Ascending aorta (tissue), 2 donors: ENCODE measurements at regions of chr9 and their contacts with region 1.

Region 1: DNA sequence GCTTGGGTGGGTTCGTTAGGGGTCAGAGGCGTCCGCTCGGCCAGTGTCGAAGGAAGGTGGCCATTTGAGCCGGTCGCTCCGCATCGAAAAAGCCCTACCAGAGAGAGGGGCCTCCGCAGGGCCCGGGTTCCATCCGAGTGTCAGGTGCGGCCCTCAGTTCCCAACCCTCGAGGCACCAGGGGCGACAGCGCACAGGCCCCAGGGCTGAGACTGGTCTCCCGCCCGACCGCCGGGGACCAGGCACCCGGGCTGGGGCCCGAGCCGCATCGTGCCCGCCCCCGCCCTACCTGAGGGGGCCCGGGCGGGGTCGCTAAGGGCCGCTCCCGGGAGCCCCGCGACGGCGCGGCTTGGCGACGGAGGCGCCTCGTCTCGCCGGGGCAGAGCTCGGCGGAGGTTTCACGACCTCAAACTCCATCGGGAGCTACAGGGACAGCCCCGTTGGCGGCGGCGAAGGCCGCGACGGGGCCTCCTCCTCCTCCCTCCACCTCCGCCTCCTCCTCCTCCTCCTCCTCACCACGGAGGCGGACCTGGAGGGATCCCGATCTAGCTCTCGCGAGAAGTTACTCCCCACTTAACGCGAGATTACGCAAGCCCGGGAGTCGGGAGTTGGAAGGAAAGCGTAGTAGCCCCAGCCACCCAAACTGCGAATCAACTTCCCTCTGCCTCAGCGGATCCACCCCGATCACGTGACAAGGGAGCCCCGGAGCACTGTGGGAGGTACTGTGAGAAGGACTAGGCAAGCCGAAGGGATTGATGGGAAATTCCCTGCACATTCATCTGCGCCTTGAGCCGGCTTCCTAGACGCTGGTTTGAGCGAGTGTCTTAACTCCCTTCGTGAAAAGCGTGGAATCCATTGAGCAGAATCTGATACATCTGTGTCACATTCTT is at the start of gene RC3H2:
- DNase-seq: peak; percentile 98 to 100
- H3K4me3 ChIP-seq: peak within 1 kb of the TSS; percentile 83 to 96
- H3K27ac ChIP-seq: peak within 1 kb of the TSS; percentile 97 to 98
- H3K4me1 ChIP-seq: peaks cover 0 to 26% of the 10 kb centered on the region in 2 donors
- H3K27me3 ChIP-seq: no peaks in the 10 kb centered on the region
- CTCF ChIP-seq: no peak
- total RNA-seq, gene RC3H2: 25.1 TPM

Region 2: GRCh38 chr9:122810306-122810946 is 94.6 kb before region 1 on chr9:
- intact Hi-C with region 1: no loop called
- DNase-seq: peak in 1 of 2 donors; percentile 72
- H3K4me3 ChIP-seq: no peak overlapping the region
- H3K27ac ChIP-seq: no peak overlapping the region
- H3K4me1 ChIP-seq: no peaks in the 10 kb centered on the region
- H3K27me3 ChIP-seq: no peaks in the 10 kb centered on the region
- CTCF ChIP-seq: peak; percentile 63 to 80 (median 79)

Region 3: DNA sequence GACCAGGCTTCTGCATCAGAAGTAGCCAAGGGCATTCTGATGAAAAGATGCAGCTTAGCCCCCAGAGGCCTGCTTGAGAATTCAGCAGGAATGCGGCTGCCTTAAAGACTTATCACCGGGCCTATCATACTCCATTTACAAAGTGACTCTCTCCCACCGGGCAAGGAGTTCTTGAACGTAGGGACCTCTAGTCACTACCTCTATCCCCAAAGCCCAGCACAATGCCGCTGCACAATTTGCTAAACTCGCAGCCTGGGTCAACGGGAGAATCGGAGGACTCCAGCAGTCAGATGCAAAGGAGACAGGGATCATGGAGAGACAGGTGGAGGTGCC is 77.3 kb before region 1 on chr9:
- intact Hi-C with region 1: loop called (anchors 2 kb)
- DNase-seq: no peak
- H3K4me3 ChIP-seq: peak overlapping the region; percentile 64 to 92
- H3K27ac ChIP-seq: peak overlapping the region; percentile 93 to 98
- H3K4me1 ChIP-seq: peaks cover 3 to 15% of the 10 kb centered on the region in 2 donors
- H3K27me3 ChIP-seq: no peaks in the 10 kb centered on the region
- CTCF ChIP-seq: no peak

Region 4: DNA sequence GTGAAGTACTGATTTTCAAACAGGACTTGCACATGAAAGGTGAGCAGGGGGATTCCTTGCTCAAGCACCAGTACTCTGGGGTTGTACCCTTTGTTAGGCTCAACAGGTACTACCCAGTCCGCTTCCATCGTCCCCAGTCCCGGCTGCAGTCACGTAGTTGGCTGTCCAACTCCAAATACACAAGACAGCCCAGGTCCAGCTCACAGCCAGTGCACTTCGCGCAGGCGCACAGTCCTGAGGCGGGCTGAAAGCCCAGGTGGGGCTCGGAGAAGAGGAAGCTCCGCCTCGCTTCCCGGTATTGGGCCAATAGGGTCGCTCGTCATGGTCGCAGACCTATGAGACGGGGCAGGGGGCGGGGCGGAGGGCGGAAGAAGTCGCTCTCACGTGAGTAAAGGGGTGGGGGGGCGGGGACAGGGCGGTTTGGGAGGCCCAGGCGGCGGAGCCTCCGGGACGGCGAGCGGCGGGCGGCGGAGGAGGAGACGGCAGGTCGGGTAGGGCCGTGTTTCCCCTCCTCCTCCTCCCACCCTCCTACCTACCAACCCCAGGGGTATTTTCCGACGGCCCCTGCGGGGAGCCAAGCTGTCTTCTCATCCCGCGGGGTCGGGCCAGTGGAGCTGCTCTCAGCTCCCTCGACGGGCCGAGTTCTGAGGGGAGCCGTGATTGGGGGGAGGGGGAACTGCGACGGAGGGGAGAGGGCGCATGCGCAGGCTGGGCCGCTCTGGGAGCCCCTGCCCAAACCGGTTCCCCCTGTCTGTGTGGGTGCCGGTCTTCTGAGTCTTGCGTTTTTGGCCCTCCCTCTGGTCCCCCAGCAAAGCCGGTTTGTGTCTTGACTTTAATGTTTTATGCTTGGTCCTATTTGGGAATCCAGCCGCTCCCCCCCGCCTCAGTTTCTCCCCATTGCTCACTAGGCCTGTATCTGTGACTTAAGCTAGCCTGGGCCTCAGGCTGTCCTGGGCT is 35.8 kb after region 1 on chr9 and contains the start of gene RABGAP1:
- intact Hi-C with region 1: loop called (anchors 1 kb)
- DNase-seq: peak; percentile 97 to 100
- H3K4me3 ChIP-seq: peak within 1 kb of the TSS; percentile 96 to 97
- H3K27ac ChIP-seq: peak within 1 kb of the TSS; percentile 90 to 93
- H3K4me1 ChIP-seq: peaks cover 9 to 12% of the 10 kb centered on the region in 2 donors
- H3K27me3 ChIP-seq: no peaks in the 10 kb centered on the region
- CTCF ChIP-seq: no peak
- total RNA-seq, gene RABGAP1: 36.5 TPM

Region 5: DNA sequence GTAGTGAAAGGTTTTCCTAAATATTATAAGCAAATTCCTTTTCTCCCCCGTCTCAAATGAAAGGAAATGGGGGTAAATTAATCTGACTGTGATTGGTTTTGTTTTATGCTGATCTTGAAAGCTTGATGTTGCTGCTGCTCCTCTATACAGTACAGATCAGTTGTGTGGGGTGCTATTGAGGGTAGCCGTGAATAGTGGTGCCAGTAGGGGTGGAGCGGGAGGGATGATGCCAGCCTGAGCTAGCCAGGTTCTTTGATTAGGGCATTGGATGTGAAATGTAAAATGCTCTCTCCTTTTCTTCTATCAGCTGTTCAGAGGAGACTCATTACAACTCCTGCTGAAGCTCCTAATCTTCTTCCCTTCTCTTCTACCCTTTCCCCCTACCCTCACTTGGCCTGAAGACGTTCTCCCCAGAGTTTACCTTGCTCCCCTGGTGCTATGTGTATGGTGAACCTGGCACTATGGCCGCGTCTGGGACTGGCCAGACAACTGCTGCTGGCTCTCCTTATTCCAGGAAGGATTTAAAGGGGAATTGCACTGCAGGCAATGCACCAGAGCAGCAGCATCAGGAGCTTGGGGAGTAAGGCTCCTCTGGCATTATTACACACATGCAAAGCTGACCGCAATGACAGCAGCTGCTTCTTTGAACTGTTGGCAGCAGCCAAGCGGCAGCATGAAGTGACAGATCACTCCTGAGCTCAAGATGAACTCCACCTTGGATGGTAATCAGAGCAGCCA is 129.0 kb after region 1 on chr9:
- intact Hi-C with region 1: no loop called
- DNase-seq: no peak
- H3K4me3 ChIP-seq: peak overlapping the region; percentile 40 to 56
- H3K27ac ChIP-seq: peak overlapping the region; percentile 82 to 86
- H3K4me1 ChIP-seq: peaks cover 0 to 37% of the 10 kb centered on the region in 2 donors
- H3K27me3 ChIP-seq: no peaks in the 10 kb centered on the region
- CTCF ChIP-seq: no peak

Region 6: DNA sequence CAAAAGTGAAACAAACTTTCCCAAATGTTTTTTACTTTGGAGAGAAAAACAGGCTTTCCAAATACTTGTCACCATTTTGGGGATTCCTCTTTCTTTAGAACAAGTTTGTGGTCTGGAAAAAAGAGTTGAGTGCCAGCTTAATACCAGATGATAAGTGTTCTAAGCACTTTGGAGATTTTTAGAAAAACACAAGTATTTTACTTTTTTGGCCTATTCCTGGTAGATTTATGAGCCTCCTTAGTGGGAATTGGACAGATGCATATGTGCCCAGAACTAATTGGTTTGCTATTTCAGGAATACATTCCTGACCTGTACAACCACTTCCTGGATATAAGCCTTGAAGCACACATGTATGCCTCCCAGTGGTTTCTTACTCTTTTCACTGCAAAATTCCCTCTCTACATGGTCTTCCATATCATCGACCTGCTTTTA is 168.9 kb after region 1 on chr9:
- intact Hi-C with region 1: loop called (anchors 10 kb)
- DNase-seq: no peak
- H3K4me3 ChIP-seq: peak overlapping the region in 1 of 2 donors; percentile 33
- H3K27ac ChIP-seq: peak overlapping the region; percentile 68 to 71
- H3K4me1 ChIP-seq: peaks cover 8 to 20% of the 10 kb centered on the region in 2 donors
- H3K27me3 ChIP-seq: no peaks in the 10 kb centered on the region
- CTCF ChIP-seq: no peak

Region 7: GRCh38 chr9:124270504-124271335 is 1365.7 kb after region 1 on chr9:
- intact Hi-C with region 1: loop called (anchors 10 kb)
- DNase-seq: peak; percentile 54 to 82
- H3K4me3 ChIP-seq: no peak overlapping the region
- H3K27ac ChIP-seq: peak overlapping the region; percentile 77
- H3K4me1 ChIP-seq: peaks cover 20 to 60% of the 10 kb centered on the region in 2 donors
- H3K27me3 ChIP-seq: no peaks in the 10 kb centered on the region
- CTCF ChIP-seq: no peak